Activated CD8-positive, alpha-beta memory T cell treated with anti-CD3 and anti-CD28 coated beads, Interleukin-2, amount 10 ng/mL, durations not matched to agents 7 days and 5 days (primary cell): ENCODE measurements at regions of chr10 and their contacts with region 1.

Region 1: DNA sequence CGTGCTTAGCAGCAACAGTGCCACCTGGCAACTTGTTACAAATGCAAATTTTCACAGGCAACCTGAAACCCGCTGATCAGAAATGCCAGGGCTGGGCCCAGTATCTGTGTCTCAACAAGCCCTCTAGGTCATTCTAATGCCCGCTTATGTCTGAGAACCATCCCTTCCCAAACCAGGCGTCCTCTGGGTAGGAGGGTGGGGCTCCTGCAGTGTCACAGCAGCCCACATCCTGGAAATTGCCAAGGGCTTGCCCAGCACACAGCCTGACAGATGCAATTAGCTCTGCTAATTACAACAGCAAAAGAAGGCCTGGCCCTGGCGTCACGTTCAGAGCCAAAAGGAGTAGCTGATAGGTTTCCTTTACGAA is 15.9 kb downstream of the ITPRIP start:
- DNase-seq: peak; percentile 74
- ATAC-seq: peak; percentile 69
- H3K4me3 Mint-ChIP-seq: peak overlapping the region; percentile 45
- H3K27ac Mint-ChIP-seq: peak overlapping the region; percentile 84
- H3K4me1 Mint-ChIP-seq: peaks cover 66% of the 10 kb centered on the region
- H3K27me3 Mint-ChIP-seq: no peaks in the 10 kb centered on the region

Region 2: DNA sequence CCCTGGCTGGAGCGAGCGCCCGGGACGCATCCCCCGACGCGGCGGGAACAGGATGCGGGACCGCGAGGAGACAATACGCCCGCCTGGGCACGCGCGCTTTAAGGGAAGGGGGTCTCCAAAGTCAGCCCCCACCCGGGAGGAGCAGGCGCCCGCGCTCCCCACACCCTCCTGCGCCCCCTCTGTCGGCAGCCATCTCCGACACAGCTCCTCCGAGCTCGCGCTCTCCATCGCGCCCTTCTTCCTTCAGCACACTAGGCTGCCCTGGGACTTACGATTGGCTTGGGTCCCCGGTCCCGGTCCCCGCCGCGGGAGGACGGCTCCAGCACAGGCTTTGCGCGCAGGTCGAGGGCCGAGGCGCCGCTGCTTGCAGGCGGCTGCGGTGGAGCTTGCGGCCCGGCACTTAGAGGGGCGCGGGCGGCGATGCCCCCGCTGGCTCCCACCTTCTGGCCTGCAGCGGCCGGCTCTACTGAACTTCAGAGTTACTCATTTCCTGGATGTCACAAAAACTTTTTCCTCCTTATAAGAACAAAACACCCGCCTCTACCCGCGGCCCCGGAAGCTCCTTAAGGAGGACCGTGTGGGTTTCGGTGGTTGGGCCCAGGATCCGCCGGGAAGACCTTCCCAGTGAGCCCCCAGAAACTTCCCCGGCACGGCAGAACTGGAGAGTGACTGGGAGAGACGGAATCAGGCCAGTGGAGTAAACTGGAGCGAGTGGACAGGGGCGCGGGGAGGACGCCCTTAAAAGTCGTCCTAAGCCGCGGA is 15.8 kb after region 1 on chr10 and contains the start of gene ITPRIP:
- CTCF ChIA-PET with region 1: interaction called, 22 read pairs
- DNase-seq: peak; percentile 84
- ATAC-seq: peak; percentile 80
- H3K4me3 Mint-ChIP-seq: peak within 1 kb of the TSS; percentile 95
- H3K27ac Mint-ChIP-seq: peak within 1 kb of the TSS; percentile 100
- H3K4me1 Mint-ChIP-seq: peaks cover 50% of the 10 kb centered on the region
- H3K27me3 Mint-ChIP-seq: peaks cover 9% of the 10 kb centered on the region
- total RNA-seq, gene ITPRIP: 21.6 to 21.9 TPM

Region 3: DNA sequence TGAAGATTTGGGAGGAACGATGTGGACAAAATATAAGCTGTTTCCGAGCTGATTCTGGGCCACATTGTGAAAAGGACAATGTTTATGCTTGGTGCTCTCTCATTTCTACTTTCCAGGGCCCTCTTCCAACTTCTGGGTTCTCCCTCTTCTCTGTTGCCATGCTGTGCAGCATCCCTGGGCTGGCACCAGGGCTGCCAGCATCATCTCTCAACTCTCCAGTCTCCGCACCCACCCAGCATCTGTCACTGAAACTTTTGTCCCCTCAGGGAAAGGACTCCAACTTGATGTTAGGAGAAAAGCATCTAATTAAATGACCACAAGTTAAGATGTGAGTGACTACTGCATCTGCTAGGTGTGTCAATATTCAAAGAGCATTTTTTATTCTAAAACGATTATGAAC is 57.9 kb after region 1 on chr10:
- CTCF ChIA-PET with region 1: no interaction called
- DNase-seq: no peak
- ATAC-seq: no peak
- H3K4me3 Mint-ChIP-seq: no peak overlapping the region
- H3K27ac Mint-ChIP-seq: no peak overlapping the region
- H3K4me1 Mint-ChIP-seq: peaks cover 5% of the 10 kb centered on the region
- H3K27me3 Mint-ChIP-seq: peaks cover 56% of the 10 kb centered on the region